HepG2 (cell line): ENCODE measurements at regions of chr14 and their contacts with region 1.

Region 1: GRCh38 chr14:24411443-24412389 is 12.9 kb downstream of the NYNRIN start:
- DNase-seq: peak; percentile 69
- ATAC-seq: peak; percentile 69
- H3K4me3 ChIP-seq: no peak overlapping the region
- H3K27ac ChIP-seq: no peak overlapping the region
- H3K4me1 ChIP-seq: no peaks in the 10 kb centered on the region
- H3K27me3 ChIP-seq: peaks cover 0 to 2% of the 10 kb centered on the region in 2 experiments; a peak in 1 of 5 replicates
- CTCF ChIP-seq: peak; percentile 88
- EP300 ChIP-seq: peak in 1 of 2 experiments; percentile 37; a peak in 1 of 4 replicates
- POLR2A ChIP-seq: no peak
- RAD21 ChIP-seq: peak; percentile 83

Region 2: DNA sequence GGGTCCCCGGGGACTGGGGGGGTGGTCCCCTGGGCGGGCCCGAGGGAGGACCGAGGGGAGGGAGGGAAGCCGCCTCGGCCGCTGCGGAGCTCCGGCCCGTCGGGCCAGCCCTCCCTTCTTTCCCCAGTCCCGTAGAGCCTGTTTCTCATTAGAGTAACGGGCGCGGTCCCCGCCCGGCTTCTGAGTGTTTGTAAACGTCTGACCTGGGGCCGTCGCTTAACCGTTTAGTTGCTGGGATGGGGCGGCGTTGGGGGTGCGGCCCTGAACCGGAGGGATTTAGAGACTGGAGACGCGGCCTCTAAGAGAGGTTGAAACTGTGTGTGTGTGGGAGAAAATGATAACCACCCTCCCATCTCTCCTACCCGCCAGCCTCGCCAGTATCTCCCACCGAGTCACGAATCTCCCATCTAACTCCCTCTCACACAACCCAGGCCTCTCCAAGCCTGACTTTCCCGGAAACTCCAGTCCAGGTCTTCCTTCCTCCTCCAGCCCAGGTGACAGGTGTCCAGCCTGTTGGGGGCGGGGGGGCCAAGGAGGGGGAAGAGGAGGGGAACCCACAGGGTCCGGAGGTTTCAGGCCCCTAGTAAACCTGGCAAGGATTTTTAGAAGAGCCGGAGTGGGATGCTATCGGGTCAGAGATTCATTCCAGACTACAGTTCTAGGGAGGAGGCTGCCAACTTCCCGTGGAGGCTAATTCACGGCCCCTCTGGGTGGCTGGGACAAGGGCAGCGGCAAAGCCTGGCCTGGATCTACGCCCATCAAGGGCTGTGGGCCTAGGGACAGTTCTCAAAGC is 44.8 kb before region 1 on chr14:
- CTCF ChIA-PET with region 1: interaction called, 72 read pairs
- POLR2A ChIA-PET with region 1: no interaction called
- in situ Hi-C with region 1: no loop called
- intact Hi-C with region 1: loop called (anchors 1 kb)
- DNase-seq: peak; percentile 92
- ATAC-seq: peak; percentile 83
- H3K4me3 ChIP-seq: peak overlapping the region; percentile 71 to 80 (median 74)
- H3K27ac ChIP-seq: no peak overlapping the region
- H3K4me1 ChIP-seq: peaks cover 26% of the 10 kb centered on the region
- H3K27me3 ChIP-seq: peaks cover 20 to 54% of the 10 kb centered on the region in 2 experiments
- CTCF ChIP-seq: no peak; the same call in 1 of the 2 replicates
- EP300 ChIP-seq: peak in 1 of 2 experiments; percentile 29; a peak in 1 of 4 replicates
- POLR2A ChIP-seq: no peak
- RAD21 ChIP-seq: no peak

Region 3: GRCh38 chr14:24372701-24373416 is 38.9 kb before region 1 on chr14:
- CTCF ChIA-PET with region 1: interaction called, 72 read pairs
- POLR2A ChIA-PET with region 1: no interaction called
- in situ Hi-C with region 1: no loop called
- intact Hi-C with region 1: loop called (anchors 2 kb)
- DNase-seq: no peak
- ATAC-seq: no peak
- H3K4me3 ChIP-seq: no peak overlapping the region
- H3K27ac ChIP-seq: no peak overlapping the region
- H3K4me1 ChIP-seq: peaks cover 10% of the 10 kb centered on the region
- H3K27me3 ChIP-seq: peaks cover 22 to 53% of the 10 kb centered on the region in 2 experiments
- CTCF ChIP-seq: no peak
- EP300 ChIP-seq: no peak
- POLR2A ChIP-seq: no peak
- RAD21 ChIP-seq: no peak

Region 4: GRCh38 chr14:24387009-24387345 is 24.7 kb before region 1 on chr14:
- CTCF ChIA-PET with region 1: interaction called, 3 read pairs
- POLR2A ChIA-PET with region 1: no interaction called
- in situ Hi-C with region 1: no loop called
- intact Hi-C with region 1: loop called (anchors 2 kb)
- DNase-seq: no peak
- ATAC-seq: peak; percentile 58
- H3K4me3 ChIP-seq: no peak overlapping the region
- H3K27ac ChIP-seq: no peak overlapping the region
- H3K4me1 ChIP-seq: peaks cover 33% of the 10 kb centered on the region
- H3K27me3 ChIP-seq: peaks cover 7 to 25% of the 10 kb centered on the region in 2 experiments; a peak in 4 of 5 replicates
- CTCF ChIP-seq: no peak
- EP300 ChIP-seq: no peak
- POLR2A ChIP-seq: no peak
- RAD21 ChIP-seq: no peak

Region 5: GRCh38 chr14:24425704-24426103 is 14.0 kb after region 1 on chr14:
- CTCF ChIA-PET with region 1: interaction called, 8 read pairs
- POLR2A ChIA-PET with region 1: interaction called, 9 read pairs
- in situ Hi-C with region 1: no loop called
- intact Hi-C with region 1: loop called (anchors 1 kb)
- DNase-seq: peak; percentile 63
- ATAC-seq: no peak
- H3K4me3 ChIP-seq: no peak overlapping the region
- H3K27ac ChIP-seq: no peak overlapping the region
- H3K4me1 ChIP-seq: peaks cover 74% of the 10 kb centered on the region
- H3K27me3 ChIP-seq: no peaks in the 10 kb centered on the region; a peak in 2 of 5 replicates
- CTCF ChIP-seq: no peak
- EP300 ChIP-seq: no peak
- POLR2A ChIP-seq: no peak
- RAD21 ChIP-seq: no peak